ENCODE measurements at regions of chr17 and their contacts with region 1.

Region 1: DNA sequence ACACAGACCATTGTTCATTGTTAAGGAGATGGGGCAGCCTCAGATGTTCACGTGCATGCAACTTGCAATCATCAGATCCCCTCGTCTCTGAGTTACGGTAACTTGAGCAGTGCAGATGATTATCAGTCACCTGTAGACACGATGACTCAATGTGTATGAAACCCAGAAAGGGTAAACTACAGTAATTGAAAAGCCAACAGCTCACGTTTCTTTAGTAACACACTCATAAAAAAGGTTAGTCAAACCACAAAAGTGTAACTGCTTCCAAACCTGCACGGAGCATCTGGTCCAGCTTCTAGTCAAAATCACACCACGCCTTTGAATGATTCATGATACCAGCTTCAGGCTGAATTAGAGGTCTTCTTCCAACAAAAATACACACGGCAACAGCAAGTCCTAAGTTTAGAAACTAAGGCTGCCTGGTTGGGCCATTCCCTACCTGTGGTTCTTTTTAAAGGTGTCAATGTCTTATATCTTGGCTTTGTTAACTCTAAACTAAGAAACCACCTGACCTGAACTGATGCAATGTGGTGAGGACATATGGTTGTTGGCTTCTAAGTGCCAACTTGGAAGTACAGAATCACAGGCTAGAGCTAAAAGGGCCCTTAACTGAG is 32.3 kb downstream of the GRB7 start:
- DNase-seq: peak in 7 of 9 donors; percentile 46 to 81 (median 63)
- ATAC-seq: peak; percentile 81
- H3K4me3 ChIP-seq: no peak overlapping the region
- H3K4me3 Mint-ChIP-seq: peak overlapping the region; percentile 29 to 83 (median 57)
- H3K27ac ChIP-seq: peak overlapping the region; percentile 71
- H3K27ac Mint-ChIP-seq: peak overlapping the region; percentile 78 to 98 (median 94)
- H3K4me1 ChIP-seq: peaks cover 77 to 92% of the 10 kb centered on the region in 2 donors
- H3K4me1 Mint-ChIP-seq: peaks cover 73 to 99% (median 98%) of the 10 kb centered on the region in 7 donors
- H3K27me3 ChIP-seq: no peaks in the 10 kb centered on the region
- H3K27me3 Mint-ChIP-seq: no peaks in the 10 kb centered on the region

Region 2: DNA sequence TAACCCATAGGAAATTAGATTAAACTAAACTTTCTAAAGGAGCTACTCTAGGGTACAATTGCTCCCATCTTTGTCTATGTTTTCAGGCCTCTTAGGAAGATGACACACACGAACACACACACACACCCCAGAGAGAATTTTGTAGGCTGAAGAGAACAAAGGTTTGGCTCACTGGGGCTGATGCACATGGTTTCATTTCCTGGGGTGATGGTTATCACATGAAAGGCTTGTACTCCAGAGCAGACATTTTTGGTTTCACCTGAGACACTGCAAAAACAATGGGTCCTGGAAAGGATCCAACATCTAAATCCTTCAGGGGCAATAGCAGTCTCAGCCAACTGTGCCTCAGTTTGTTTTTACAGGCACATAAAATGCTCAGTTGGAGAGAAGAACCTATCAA is 30.5 kb after region 1 on chr17:
- CTCF ChIA-PET with region 1: no interaction called
- POLR2A ChIA-PET with region 1: interaction called, 48 read pairs
- intact Hi-C with region 1: loop called in 1 of 2 experiments (anchors 2 kb)
- DNase-seq: peak in 8 of 9 donors; percentile 46 to 81 (median 80)
- ATAC-seq: peak; percentile 99
- H3K4me3 ChIP-seq: peak overlapping the region; percentile 38
- H3K4me3 Mint-ChIP-seq: peak overlapping the region; percentile 22 to 81 (median 61)
- H3K27ac ChIP-seq: peak overlapping the region; percentile 52
- H3K27ac Mint-ChIP-seq: peak overlapping the region; percentile 89 to 97 (median 94)
- H3K4me1 ChIP-seq: peaks cover 27 to 53% of the 10 kb centered on the region in 2 donors
- H3K4me1 Mint-ChIP-seq: peaks cover 35 to 82% (median 69%) of the 10 kb centered on the region in 7 donors
- H3K27me3 ChIP-seq: no peaks in the 10 kb centered on the region
- H3K27me3 Mint-ChIP-seq: no peaks in the 10 kb centered on the region

Region 3: DNA sequence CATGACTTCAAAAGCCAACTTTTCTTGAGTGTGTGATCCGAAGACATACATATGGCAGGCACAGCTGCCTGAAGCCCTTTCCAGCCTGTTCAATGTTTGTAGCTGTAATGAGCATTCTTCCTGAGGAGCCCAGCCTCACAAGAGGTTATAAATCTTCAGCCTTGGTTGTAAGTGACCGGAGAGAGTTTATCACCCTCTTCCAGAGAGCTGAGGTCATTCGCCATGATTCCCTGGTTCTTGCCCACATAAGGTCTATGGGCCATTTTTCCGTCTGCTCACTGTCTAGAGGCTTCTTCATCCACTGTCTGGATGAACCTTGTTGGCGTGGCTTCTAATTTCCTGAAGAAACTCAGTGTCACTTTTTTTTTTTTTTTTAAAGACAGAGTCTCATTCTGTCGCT is 235.4 kb after region 1 on chr17:
- CTCF ChIA-PET with region 1: no interaction called
- POLR2A ChIA-PET with region 1: no interaction called
- intact Hi-C with region 1: no loop called
- DNase-seq: no peak
- ATAC-seq: no peak
- H3K4me3 ChIP-seq: no peak overlapping the region
- H3K4me3 Mint-ChIP-seq: no peak overlapping the region
- H3K27ac ChIP-seq: no peak overlapping the region
- H3K27ac Mint-ChIP-seq: no peak overlapping the region
- H3K4me1 ChIP-seq: peaks cover 0 to 7% of the 10 kb centered on the region in 2 donors
- H3K4me1 Mint-ChIP-seq: peaks cover 0 to 8% (median 8%) of the 10 kb centered on the region in 7 donors
- H3K27me3 ChIP-seq: no peaks in the 10 kb centered on the region
- H3K27me3 Mint-ChIP-seq: peaks cover 0 to 8% (median 0%) of the 10 kb centered on the region in 5 donors